Activated naive CD4-positive, alpha-beta T cell treated with anti-CD3 and anti-CD28 coated beads for 36 hours (primary cell): ENCODE measurements at regions of chr2 and their contacts with region 1.

Region 1: GRCh38 chr2:182077451-182078142 is 91.9 kb downstream of the PPP1R1C start:
- DNase-seq: peak; percentile 28
- H3K4me3 Mint-ChIP-seq: no peak overlapping the region
- H3K27ac Mint-ChIP-seq: no peak overlapping the region
- H3K4me1 Mint-ChIP-seq: no peaks in the 10 kb centered on the region
- H3K27me3 Mint-ChIP-seq: peaks cover 7% of the 10 kb centered on the region

Region 2: DNA sequence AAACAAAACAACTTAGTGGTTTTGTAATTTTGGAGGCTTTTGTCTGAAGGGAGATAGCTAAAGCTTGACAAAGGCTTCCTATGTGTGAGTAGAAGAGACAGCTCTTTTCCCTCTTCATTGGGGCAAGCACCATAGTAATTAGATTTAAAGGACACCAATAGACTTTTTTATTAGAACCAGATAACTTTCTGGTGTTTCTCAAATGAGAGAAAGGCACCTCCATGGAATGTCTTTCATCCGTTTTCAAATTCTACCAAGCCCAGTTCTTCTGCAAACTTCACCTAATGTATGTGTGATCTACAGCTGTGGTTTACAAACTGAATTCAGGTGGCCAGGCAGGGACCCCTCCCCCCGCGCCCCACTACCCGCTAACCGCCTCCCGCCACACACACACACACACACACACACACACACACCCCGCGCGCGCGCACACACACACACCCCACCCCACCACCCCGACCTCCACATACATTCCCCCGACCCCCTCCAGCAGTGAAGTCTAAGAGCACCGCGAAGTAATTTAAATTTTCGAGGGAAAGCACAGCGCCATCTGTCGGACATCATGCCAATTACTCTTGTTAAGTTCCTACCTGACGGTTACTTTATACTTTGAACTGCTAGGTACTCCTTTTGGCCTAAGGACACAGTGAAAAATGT is 123.6 kb before region 1 on chr2:
- CTCF ChIA-PET with region 1: interaction called, 3 read pairs
- intact Hi-C with region 1: loop called (anchors 5 kb)
- DNase-seq: peak; percentile 82
- H3K4me3 Mint-ChIP-seq: peak overlapping the region; percentile 17
- H3K27ac Mint-ChIP-seq: no peak overlapping the region
- H3K4me1 Mint-ChIP-seq: peaks cover 9% of the 10 kb centered on the region
- H3K27me3 Mint-ChIP-seq: peaks cover 19% of the 10 kb centered on the region